OCI-LY7 (cell line): ENCODE measurements at regions of chr3 and their contacts with region 1.

Region 1: DNA sequence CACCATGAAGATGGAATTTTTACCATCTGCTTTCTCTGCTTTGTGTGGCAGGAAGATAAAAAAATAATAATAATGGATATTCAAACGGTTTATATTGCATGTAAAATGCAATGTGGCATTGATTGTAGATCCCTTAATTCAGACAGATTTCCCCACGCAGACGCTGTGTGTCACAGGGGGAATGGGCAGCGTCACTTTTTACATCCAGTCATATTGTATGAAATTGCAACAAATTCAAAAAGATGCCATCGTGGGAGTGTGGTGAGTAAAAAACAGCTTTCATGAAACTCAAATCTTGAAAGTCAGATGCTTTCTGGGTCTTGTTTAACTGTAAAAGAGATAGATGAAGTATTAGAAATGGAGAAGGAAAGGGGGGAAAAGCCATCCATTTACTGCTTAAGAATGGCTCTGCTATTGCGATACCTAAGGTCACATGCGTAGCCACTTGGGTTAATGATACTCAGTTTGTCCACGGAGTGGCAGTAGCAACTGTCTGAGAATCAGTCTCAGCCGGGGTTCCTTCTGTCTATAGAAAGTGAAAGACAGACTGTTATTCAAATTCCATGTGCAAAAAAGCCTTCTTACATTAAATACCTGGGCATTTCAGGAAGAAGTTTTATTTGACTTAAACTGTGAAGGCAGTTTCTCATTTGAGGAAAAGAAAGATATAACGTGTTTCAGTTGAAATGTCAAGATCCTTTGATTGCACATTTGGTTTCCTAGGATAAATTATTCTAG is 28.5 kb downstream of the BTD start:
- DNase-seq: peak; percentile 87
- H3K4me3 ChIP-seq: peak overlapping the region; percentile 35
- H3K27ac ChIP-seq: no peak overlapping the region
- H3K4me1 ChIP-seq: peaks cover 10% of the 10 kb centered on the region
- CTCF ChIP-seq: peak; percentile 94

Region 2: GRCh38 chr3:15815696-15816095 is 185.7 kb after region 1 on chr3:
- CTCF ChIA-PET with region 1: interaction called, 3 read pairs
- POLR2A ChIA-PET with region 1: no interaction called
- intact Hi-C with region 1: loop called (anchors 1 kb)
- DNase-seq: peak; percentile 59
- H3K4me3 ChIP-seq: no peak overlapping the region
- H3K27ac ChIP-seq: no peak overlapping the region
- H3K4me1 ChIP-seq: peaks cover 30% of the 10 kb centered on the region
- CTCF ChIP-seq: peak; percentile 78

Region 3: DNA sequence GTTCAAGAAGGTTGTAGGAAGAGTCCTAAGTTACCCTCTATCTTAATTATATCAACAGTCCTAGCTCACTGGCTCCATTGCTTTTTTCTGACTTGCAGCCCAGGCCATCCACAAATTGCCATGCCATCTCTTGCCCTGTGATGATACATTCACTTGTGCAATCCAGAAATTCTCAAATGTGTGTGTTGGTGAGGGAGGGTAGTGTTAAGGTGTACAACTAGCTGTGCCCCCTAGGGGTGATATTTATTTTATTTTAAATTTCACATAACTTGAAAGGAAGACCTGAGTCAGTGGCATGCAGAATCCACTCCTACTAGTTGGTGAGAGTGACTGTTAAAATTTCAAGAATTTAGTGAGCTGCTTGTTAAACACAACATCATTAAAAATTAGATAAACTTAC is 323.8 kb after region 1 on chr3:
- CTCF ChIA-PET with region 1: no interaction called
- POLR2A ChIA-PET with region 1: no interaction called
- intact Hi-C with region 1: loop called (anchors 10 kb)
- DNase-seq: peak; percentile 35
- H3K4me3 ChIP-seq: no peak overlapping the region
- H3K27ac ChIP-seq: no peak overlapping the region
- H3K4me1 ChIP-seq: no peaks in the 10 kb centered on the region
- CTCF ChIP-seq: peak; percentile 68

Region 4: GRCh38 chr3:16177962-16178627 is 548.1 kb after region 1 on chr3:
- CTCF ChIA-PET with region 1: no interaction called
- POLR2A ChIA-PET with region 1: no interaction called
- intact Hi-C with region 1: loop called (anchors 2 kb)
- DNase-seq: peak; percentile 53
- H3K4me3 ChIP-seq: no peak overlapping the region
- H3K27ac ChIP-seq: no peak overlapping the region
- H3K4me1 ChIP-seq: no peaks in the 10 kb centered on the region
- CTCF ChIP-seq: peak; percentile 92

Region 5: DNA sequence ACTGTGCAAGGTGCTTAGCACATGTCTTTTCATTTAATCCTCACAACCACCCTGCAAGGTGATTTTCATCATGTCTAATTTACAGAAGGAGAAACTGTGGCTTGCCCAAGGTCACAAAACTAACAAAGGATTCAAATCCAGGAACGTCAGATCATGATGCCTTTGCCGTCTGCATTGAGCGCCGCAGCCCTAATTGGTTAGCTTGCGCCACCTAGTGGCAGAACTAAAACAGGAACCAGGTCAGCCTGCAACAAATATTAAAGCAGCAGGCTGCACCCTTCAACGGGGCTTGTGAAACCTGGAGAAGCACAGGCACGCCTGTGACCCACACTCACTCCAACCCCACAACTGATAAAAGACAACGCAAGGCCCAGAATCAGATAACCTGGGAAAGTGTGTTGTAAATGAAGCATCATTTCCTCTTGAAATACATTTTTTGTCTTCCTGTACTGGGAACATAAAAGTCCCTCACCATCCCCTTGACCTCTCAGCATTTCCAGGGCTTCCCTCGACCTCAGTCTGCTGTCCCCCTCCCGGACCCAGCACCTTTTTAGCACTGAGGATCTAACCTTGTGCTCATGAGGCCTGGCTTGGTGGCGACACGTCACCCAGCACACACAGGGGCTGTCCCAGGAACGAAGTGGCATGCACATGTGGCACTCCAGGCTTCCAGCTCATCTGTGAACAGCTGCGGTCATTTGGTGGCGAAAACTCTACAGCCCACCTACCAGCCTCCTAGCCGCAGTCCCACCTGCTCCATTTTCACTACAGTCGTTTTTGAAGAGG is 617.4 kb after region 1 on chr3:
- CTCF ChIA-PET with region 1: no interaction called
- POLR2A ChIA-PET with region 1: no interaction called
- intact Hi-C with region 1: loop called (anchors 5 kb)
- DNase-seq: peak; percentile 88
- H3K4me3 ChIP-seq: no peak overlapping the region
- H3K27ac ChIP-seq: no peak overlapping the region
- H3K4me1 ChIP-seq: peaks cover 6% of the 10 kb centered on the region
- CTCF ChIP-seq: peak; percentile 97